ENCODE measurements at regions of chr15 and their contacts with region 1.

Region 1: DNA sequence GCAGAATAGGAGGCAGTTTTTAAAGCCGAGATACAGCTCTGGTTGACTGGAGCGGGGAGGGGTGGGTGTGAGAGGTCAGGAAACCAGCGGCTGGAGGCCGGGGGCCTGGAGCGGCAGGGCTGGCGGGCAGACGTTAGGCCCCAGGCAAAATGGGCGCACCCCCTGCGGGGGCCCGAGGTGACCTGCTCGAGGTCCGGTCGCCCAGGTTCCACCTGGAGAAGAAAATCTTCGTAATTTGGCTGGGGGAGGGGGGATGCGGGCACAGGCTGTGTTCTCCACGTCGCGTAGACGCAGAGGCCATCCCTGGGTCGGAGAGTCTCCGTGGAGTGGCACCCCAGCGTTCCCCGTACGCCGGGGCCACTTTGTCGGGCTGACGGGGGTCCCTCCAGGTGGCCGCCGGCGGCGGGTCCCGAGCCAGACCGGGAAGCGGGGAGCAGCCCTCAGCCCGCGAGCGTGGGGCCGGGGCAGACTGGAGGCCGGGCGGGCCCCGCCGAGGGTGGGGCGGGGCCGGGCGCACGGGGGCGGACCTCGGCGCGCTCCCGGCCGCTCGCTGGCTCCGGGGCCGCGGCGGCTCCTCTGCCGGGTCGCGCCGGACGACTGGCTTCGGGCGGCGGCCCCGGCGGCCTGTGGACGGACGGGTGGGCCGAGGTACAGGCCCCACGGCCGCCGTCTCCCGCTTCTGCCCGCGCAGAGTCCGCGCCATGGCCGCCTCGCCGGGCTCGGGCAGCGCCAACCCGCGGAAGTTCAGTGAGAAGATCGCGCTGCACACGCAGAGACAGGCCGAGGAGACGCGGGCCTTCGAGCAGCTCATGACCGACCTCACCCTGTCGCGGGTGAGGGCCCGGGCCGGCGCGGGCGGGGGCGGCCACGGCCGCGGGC is at the start of gene CRTC3:
- DNase-seq: peak; percentile 34 to 60
- ATAC-seq: peak; percentile 79 to 96 (median 88)
- H3K4me3 ChIP-seq: peak within 1 kb of the TSS; percentile 53 to 96 (median 90)
- H3K27ac ChIP-seq: peak within 1 kb of the TSS; percentile 90 to 97 (median 95)
- H3K4me1 ChIP-seq: peaks cover 3 to 47% (median 32%) of the 10 kb centered on the region in 9 donors
- H3K27me3 ChIP-seq: no peaks in the 10 kb centered on the region
- CTCF ChIP-seq: peak in 2 of 9 donors; percentile 5 to 14
- total RNA-seq, gene CRTC3: 25.1 to 34.9 (median 29.4) TPM

Region 2: DNA sequence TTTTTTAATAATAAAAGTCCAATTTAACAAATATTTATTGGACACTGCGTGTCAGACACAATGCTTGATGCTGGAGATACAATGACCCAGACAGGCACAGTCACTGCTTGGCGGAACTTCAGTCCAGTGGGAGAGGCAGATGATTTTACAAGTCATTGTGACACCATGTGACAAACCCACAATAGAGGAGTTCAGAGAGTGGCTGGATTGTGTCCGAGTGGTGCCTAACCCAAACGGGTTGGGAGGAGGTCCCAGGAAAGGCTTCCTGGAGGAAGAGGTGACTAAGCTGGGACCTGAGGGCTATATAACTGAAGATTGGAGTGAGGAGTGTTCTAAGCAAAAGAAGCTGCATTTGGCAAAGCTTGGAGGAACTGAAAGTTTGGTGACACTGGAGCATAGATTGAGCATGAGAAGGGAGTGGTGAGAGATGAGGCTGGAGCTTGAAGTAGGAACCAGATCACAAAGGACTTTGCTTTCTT is 41.5 kb after region 1 on chr15:
- intact Hi-C with region 1: loop called in 1 of 10 experiments (anchors 5 kb)
- DNase-seq: peak in 1 of 2 donors; percentile 56
- ATAC-seq: peak; percentile 68 to 92 (median 90)
- H3K4me3 ChIP-seq: peak overlapping the region in 1 of 10 donors; percentile 3
- H3K27ac ChIP-seq: peak overlapping the region; percentile 11 to 73 (median 40)
- H3K4me1 ChIP-seq: peaks cover 10 to 62% (median 28%) of the 10 kb centered on the region in 9 donors
- H3K27me3 ChIP-seq: no peaks in the 10 kb centered on the region
- CTCF ChIP-seq: no peak

Region 3: GRCh38 chr15:90598031-90598577 is 68.5 kb after region 1 on chr15:
- intact Hi-C with region 1: loop called in 6 of 10 experiments (anchors 5 to 10 kb)
- DNase-seq: peak; percentile 37 to 59
- ATAC-seq: peak; percentile 36 to 88 (median 74)
- H3K4me3 ChIP-seq: no peak overlapping the region
- H3K27ac ChIP-seq: peak overlapping the region in 9 of 10 donors; percentile 11 to 91 (median 52)
- H3K4me1 ChIP-seq: peaks cover 0 to 64% (median 40%) of the 10 kb centered on the region in 9 donors
- H3K27me3 ChIP-seq: no peaks in the 10 kb centered on the region
- CTCF ChIP-seq: peak in 6 of 9 donors; percentile 24 to 44 (median 36)

Region 4: DNA sequence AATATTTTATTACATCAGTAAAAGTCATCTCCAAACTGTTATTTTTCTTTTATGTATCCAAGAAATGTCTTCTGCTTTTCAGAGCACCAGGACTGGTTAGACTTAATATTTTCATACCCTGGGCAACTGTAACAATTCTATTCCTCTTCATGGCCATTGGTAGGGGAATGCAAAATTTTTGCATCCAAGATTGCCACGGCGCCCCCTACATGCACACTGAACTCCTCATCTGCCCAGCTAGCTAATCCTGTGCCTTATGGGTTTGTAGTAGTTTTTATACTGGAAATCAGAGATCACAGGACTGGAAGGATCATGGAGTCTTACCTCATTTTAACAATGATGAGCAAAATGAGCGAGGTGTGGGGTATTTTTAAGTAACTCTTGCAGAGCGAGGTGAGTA is 74.3 kb after region 1 on chr15:
- intact Hi-C with region 1: loop called in 5 of 10 experiments (anchors 5 to 10 kb)
- DNase-seq: peak in 1 of 2 donors; percentile 49
- ATAC-seq: peak in 1 of 8 donors; percentile 42
- H3K4me3 ChIP-seq: no peak overlapping the region
- H3K27ac ChIP-seq: no peak overlapping the region
- H3K4me1 ChIP-seq: peaks cover 0 to 12% (median 2%) of the 10 kb centered on the region in 9 donors
- H3K27me3 ChIP-seq: no peaks in the 10 kb centered on the region
- CTCF ChIP-seq: peak in 8 of 9 donors; percentile 11 to 62 (median 51)

Region 5: DNA sequence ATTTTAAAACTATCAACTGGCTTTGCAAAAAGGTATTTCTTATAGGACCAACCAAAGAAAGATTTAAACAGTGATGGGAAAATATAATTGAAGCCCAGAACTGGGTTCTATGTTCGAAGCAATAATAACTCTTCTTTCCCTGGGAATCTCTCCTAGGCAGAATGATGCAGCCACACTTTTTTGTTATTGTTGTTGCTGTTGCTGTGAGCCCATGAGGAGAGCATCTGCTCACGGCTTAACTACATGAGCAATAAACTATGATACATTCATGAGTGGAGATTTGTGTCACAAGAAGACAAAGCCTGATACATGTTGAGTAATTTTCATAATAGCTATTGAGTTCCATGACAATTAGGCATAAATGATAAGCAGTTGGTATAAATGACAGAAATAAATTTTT is 80.6 kb after region 1 on chr15:
- intact Hi-C with region 1: loop called in 1 of 10 experiments (anchors 5 kb)
- DNase-seq: no peak
- ATAC-seq: peak in 3 of 8 donors; percentile 34 to 51 (median 50)
- H3K4me3 ChIP-seq: no peak overlapping the region
- H3K27ac ChIP-seq: peak overlapping the region in 8 of 10 donors; percentile 37 to 75 (median 72)
- H3K4me1 ChIP-seq: peaks cover 0 to 33% (median 16%) of the 10 kb centered on the region in 9 donors
- H3K27me3 ChIP-seq: no peaks in the 10 kb centered on the region
- CTCF ChIP-seq: no peak